ENCODE measurements at regions of chr5 and their contacts with region 1.

Region 1: DNA sequence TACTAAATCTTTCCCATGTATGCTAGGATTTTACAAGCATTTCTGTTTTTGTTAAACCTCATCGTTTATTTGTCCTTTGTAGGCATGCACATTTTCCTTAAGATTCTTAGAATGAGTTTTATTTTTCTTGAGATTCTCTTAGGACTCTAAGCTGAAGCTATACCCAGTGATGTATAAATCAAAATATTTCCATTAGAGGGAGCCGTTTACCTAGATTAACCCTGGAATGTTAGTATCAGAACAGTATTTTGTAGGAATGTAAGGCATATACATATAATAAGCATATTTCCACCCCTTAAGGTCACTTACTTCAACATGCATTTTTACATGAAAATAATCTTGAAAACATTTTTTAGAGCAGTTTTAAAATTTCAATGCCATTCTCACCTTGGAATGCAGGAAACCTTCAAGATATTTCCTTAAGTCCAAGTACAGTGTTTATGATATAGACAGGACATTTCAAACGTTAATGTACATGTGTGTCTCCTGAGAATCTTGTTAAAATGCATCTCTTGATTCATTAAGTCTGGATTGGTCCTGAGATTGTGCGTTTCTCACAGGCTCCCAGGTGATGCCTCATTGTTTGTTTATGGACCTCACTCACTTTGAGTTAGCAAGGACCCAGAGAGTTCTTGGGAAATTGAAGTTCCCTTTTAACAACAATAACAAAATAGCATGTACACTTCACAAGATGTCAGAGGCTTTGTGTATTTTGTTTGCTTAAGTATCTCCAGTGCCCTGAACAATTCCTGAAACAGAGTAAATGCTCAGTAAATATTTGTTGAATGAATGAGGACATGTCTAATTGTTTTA is 34.9 kb upstream of the FCHO2 start:
- DNase-seq: no peak
- H3K4me3 ChIP-seq: no peak overlapping the region
- H3K27ac ChIP-seq: no peak overlapping the region
- H3K27me3 ChIP-seq: no peaks in the 10 kb centered on the region
- CTCF ChIP-seq: peak; percentile 48; the same call in 1 of the 2 replicates

Region 2: GRCh38 chr5:72141440-72142355 is 779.2 kb before region 1 on chr5:
- CTCF ChIA-PET with region 1: no interaction called
- POLR2A ChIA-PET with region 1: no interaction called
- DNase-seq: peak; percentile 90
- H3K4me3 ChIP-seq: peak overlapping the region; percentile 0; the same call in 1 of the 2 replicates
- H3K27ac ChIP-seq: peak overlapping the region; percentile 97
- H3K27me3 ChIP-seq: no peaks in the 10 kb centered on the region
- CTCF ChIP-seq: no peak

Region 3: GRCh38 chr5:72938206-72938605 is 17.3 kb after region 1 on chr5:
- CTCF ChIA-PET with region 1: interaction called, 10 read pairs
- POLR2A ChIA-PET with region 1: no interaction called
- DNase-seq: no peak
- H3K4me3 ChIP-seq: no peak overlapping the region
- H3K27ac ChIP-seq: no peak overlapping the region
- H3K27me3 ChIP-seq: no peaks in the 10 kb centered on the region
- CTCF ChIP-seq: no peak

Region 4: GRCh38 chr5:72955768-72956323 is 35.0 kb after region 1 on chr5 and contains the start of gene FCHO2:
- CTCF ChIA-PET with region 1: no interaction called
- POLR2A ChIA-PET with region 1: interaction called, 10 read pairs
- DNase-seq: peak; percentile 90
- H3K4me3 ChIP-seq: peak within 1 kb of the TSS; percentile 72
- H3K27ac ChIP-seq: peak within 1 kb of the TSS; percentile 96
- H3K27me3 ChIP-seq: no peaks in the 10 kb centered on the region
- CTCF ChIP-seq: peak; percentile 70
- polyA plus RNA-seq, gene FCHO2: 10.4 and 12.5 TPM in 2 replicates

Measured in AG04450 (cell line).